Heart right ventricle (tissue), 16 donors: ENCODE measurements at regions of chr9 and their contacts with region 1.

Region 1: DNA sequence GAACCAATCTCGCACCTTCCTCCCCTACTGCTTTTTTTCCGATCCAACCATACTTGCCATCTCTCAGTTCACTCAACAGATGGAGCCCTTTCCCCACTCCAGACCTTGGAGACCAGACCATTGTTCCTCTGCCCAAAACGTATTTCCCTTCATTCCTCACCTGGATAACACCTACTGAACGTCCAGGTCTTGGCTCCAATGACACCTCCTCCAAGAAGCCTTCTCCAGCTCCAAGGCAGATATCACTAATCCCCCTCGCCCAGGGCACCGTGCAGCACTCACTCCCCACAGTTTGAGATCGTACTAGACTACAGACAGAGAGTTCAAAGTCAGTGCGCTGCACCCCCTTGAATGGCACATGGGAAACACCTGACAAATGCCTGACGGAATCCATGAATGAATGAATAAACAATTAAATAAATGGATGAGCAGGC is 47.1 kb upstream of the AKNA start:
- DNase-seq: no peak
- ATAC-seq: peak in 3 of 8 donors; percentile 31 to 41 (median 39)
- H3K4me3 ChIP-seq: no peak overlapping the region
- H3K27ac ChIP-seq: no peak overlapping the region
- H3K4me1 ChIP-seq: no peaks in the 10 kb centered on the region
- H3K27me3 ChIP-seq: peaks cover 0 to 41% (median 8%) of the 10 kb centered on the region in 7 donors
- CTCF ChIP-seq: peak in 7 of 9 donors; percentile 36 to 59 (median 46)

Region 2: DNA sequence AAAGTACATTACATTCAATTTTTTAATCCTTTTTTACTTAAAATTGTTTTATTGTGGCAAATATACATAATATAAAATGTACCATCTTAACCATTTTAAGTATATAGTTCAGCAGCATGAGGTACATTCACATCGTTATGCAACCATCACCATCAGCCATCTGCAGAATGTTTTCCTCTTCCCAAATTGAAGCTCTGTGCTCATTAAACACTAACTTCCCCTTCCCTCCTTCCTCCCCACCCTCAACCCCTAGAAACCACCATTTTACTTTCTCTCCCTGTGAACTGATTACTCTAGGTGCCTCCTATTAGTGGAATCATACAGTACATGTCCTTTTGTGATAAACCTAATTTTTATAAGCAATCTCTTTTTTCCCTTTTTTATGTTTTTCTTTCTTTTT is 207.1 kb after region 1 on chr9:
- intact Hi-C with region 1: loop called in 1 of 10 experiments (anchors 10 kb)
- DNase-seq: no peak
- ATAC-seq: no peak
- H3K4me3 ChIP-seq: no peak overlapping the region
- H3K27ac ChIP-seq: no peak overlapping the region
- H3K4me1 ChIP-seq: peaks cover 0 to 10% (median 0%) of the 10 kb centered on the region in 9 donors
- H3K27me3 ChIP-seq: no peaks in the 10 kb centered on the region
- CTCF ChIP-seq: no peak